Calu3 (cell line): ENCODE measurements at regions of chr14 and their contacts with region 1.

Region 1: GRCh38 chr14:88961214-88961613 is 136.8 kb downstream of the TTC8 start:
- DNase-seq: no peak
- H3K4me3 Mint-ChIP-seq: no peak overlapping the region
- H3K27ac Mint-ChIP-seq: no peak overlapping the region
- H3K4me1 Mint-ChIP-seq: no peaks in the 10 kb centered on the region
- H3K27me3 Mint-ChIP-seq: no peaks in the 10 kb centered on the region
- CTCF ChIP-seq: no peak

Region 2: DNA sequence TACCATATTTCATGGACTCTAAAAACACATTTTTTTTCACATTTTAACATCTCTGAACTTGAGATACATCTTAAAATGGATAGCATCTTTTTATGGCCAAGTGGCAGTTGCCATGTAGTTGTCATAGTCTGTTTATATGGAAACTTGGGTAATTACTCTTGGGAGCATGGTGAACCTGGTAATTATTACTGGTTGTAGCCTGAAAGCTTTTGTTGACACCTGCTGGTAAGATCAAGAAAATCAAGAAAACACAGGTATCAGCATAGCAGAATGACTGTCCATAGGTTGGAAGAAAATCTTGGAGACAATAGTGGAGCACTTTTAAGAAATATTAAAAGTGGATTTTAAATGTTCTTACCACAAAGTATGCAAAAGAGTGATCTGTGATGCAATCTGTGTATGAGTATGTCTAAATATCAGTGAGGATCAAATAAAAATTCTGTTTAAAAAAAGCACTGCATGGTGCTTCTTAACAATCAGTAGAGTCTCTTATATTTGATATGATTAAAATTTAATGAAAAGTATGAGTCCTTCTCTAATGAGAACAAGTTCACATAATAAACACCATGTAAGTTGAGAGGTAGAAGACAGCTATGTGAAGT is 92.6 kb before region 1 on chr14:
- CTCF ChIA-PET with region 1: no interaction called
- intact Hi-C with region 1: no loop called
- DNase-seq: no peak
- H3K4me3 Mint-ChIP-seq: no peak overlapping the region
- H3K27ac Mint-ChIP-seq: no peak overlapping the region
- H3K4me1 Mint-ChIP-seq: no peaks in the 10 kb centered on the region
- H3K27me3 Mint-ChIP-seq: no peaks in the 10 kb centered on the region
- CTCF ChIP-seq: no peak

Region 3: GRCh38 chr14:88975043-88975830 is 14.0 kb after region 1 on chr14:
- CTCF ChIA-PET with region 1: no interaction called
- intact Hi-C with region 1: loop called (anchors 1 kb)
- DNase-seq: no peak
- H3K4me3 Mint-ChIP-seq: no peak overlapping the region
- H3K27ac Mint-ChIP-seq: no peak overlapping the region
- H3K4me1 Mint-ChIP-seq: no peaks in the 10 kb centered on the region
- H3K27me3 Mint-ChIP-seq: peaks cover 10% of the 10 kb centered on the region
- CTCF ChIP-seq: no peak